ENCODE measurements at regions of chrX and their contacts with region 1.

Region 1: DNA sequence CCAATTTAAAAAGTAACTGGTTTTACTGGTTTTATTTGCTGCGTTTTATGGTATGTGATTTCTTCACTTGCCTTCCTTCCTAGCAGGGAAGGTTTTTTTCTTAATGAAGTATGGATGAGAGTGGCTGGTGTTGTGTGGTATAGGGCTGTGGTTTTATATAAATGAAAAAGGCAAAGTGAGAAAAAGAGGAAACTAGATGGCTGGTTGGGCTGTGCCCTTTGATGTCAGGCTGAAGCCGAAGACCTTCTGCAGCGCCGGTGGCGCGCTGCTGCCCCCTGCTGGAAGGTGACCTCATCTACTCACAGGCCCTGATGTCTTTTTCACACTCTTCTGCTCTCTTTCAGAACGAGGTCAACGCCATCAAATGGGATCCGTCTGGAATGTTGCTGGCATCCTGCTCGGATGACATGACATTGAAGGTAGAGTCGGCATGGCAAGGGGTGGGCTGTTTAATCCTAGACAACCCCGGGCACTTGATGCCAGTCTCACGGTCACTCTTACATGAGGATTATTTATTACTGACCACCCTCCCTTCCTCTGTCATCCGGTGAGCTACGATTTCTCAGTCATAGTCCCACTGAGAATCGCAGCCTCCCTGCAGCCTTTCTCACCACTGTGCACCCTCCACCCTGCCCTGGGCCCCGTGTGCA is 56.6 kb downstream of the GPR143 start:
- DNase-seq: peak; percentile 67
- ATAC-seq: peak; percentile 85
- H3K4me3 Mint-ChIP-seq: no peak overlapping the region
- H3K27ac Mint-ChIP-seq: no peak overlapping the region
- H3K4me1 Mint-ChIP-seq: peaks cover 12% of the 10 kb centered on the region
- H3K27me3 Mint-ChIP-seq: no peaks in the 10 kb centered on the region
- CTCF ChIP-seq: no peak

Region 2: GRCh38 chrX:8748855-8749254 is 960.2 kb before region 1 on chrX:
- CTCF ChIA-PET with region 1: no interaction called
- POLR2A ChIA-PET with region 1: no interaction called
- intact Hi-C with region 1: loop called (anchors 1 kb)
- DNase-seq: no peak
- ATAC-seq: no peak
- H3K4me3 Mint-ChIP-seq: no peak overlapping the region
- H3K27ac Mint-ChIP-seq: no peak overlapping the region
- H3K4me1 Mint-ChIP-seq: no peaks in the 10 kb centered on the region
- H3K27me3 Mint-ChIP-seq: peaks cover 3% of the 10 kb centered on the region
- CTCF ChIP-seq: no peak

Region 3: DNA sequence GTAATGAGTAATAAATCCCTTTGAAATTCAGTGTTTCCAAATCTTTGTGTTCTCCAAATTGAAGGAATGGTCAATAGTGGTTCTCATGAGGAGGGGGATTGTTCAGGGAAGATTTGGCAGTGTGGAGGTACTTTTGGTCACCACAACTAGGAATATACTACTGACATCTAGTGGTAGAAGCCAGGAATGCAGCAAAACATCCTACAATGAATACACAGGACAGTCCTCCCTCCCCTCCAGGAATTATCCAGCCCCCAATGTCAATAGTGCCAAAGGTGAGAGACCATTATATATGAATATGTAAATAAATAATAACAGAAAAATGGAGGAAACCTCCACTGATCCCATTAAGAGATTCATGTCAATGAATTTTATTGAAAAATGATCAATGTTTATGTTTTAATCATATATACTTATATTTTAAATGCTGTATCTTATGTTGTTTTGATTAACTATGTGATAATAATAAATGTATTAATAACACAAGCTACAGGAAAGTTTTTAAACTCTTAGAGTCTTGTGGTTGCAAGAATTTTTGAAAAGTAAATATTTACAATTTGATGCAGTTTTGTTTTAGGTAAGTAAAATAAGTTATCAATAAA is 893.5 kb before region 1 on chrX:
- CTCF ChIA-PET with region 1: no interaction called
- POLR2A ChIA-PET with region 1: no interaction called
- intact Hi-C with region 1: loop called (anchors 1 kb)
- DNase-seq: no peak
- ATAC-seq: no peak
- H3K4me3 Mint-ChIP-seq: no peak overlapping the region
- H3K27ac Mint-ChIP-seq: no peak overlapping the region
- H3K4me1 Mint-ChIP-seq: no peaks in the 10 kb centered on the region
- H3K27me3 Mint-ChIP-seq: peaks cover 3% of the 10 kb centered on the region
- CTCF ChIP-seq: no peak

Region 4: GRCh38 chrX:8971116-8971515 is 737.9 kb before region 1 on chrX:
- CTCF ChIA-PET with region 1: interaction called, 3 read pairs
- POLR2A ChIA-PET with region 1: no interaction called
- intact Hi-C with region 1: loop called (anchors 1 kb)
- DNase-seq: no peak
- ATAC-seq: peak; percentile 54
- H3K4me3 Mint-ChIP-seq: no peak overlapping the region
- H3K27ac Mint-ChIP-seq: no peak overlapping the region
- H3K4me1 Mint-ChIP-seq: no peaks in the 10 kb centered on the region
- H3K27me3 Mint-ChIP-seq: peaks cover under 1% of the 10 kb centered on the region
- CTCF ChIP-seq: no peak

Region 5: GRCh38 chrX:9677098-9677739 is 31.8 kb before region 1 on chrX:
- CTCF ChIA-PET with region 1: no interaction called
- POLR2A ChIA-PET with region 1: interaction called, 3 read pairs
- intact Hi-C with region 1: loop called (anchors 2 kb)
- DNase-seq: no peak
- ATAC-seq: peak; percentile 89
- H3K4me3 Mint-ChIP-seq: peak overlapping the region; percentile 58
- H3K27ac Mint-ChIP-seq: peak overlapping the region; percentile 89
- H3K4me1 Mint-ChIP-seq: peaks cover 50% of the 10 kb centered on the region
- H3K27me3 Mint-ChIP-seq: no peaks in the 10 kb centered on the region
- CTCF ChIP-seq: no peak

Measured in activated B cell treated with CpG ODN at 0.5 μM for 24 hours (primary cell).